ENCODE measurements at regions of chr6 and their contacts with region 1.

Region 1: DNA sequence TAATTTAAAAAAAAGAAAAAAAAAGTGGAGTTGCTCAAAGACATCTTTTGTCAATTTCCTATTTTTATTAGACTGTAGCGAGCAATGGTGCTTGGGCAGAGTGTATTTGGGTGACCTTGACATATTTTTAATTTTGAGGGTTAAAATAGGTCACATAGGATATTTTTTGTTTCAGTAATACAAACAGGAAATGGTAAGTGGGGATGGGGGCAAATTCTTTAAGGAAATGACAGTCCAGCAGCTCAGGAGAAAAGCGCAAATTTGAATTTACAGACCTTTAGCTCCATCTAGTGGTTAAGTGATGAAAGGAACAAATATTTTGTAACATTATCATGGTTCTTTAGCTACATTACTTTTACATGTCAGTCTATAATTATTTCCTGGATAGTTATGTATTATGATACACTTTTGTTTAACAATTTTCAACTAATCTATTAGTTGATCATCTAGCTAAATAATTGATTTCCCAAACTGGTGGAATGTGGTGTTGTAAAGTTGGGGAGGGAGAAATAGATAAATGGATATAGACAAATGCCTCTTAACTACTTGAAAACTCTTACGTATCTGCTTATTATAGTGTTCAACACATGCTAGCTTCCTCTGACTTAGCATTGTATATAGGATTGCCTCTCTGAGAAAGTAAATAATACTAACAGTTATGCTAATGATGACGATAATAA is 10.0 kb downstream of the CITED2 start:
- DNase-seq: no peak
- H3K4me3 ChIP-seq: no peak overlapping the region
- H3K27ac ChIP-seq: no peak overlapping the region
- H3K4me1 ChIP-seq: peaks cover 0 to 4% of the 10 kb centered on the region in 2 donors
- H3K27me3 ChIP-seq: no peaks in the 10 kb centered on the region
- CTCF ChIP-seq: peak; percentile 65 to 76 (median 74)

Region 2: GRCh38 chr6:138817822-138818308 is 546.6 kb before region 1 on chr6:
- intact Hi-C with region 1: loop called (anchors 2 kb)
- DNase-seq: no peak
- H3K4me3 ChIP-seq: no peak overlapping the region
- H3K27ac ChIP-seq: no peak overlapping the region
- H3K4me1 ChIP-seq: no peaks in the 10 kb centered on the region
- H3K27me3 ChIP-seq: no peaks in the 10 kb centered on the region
- CTCF ChIP-seq: no peak

Region 3: DNA sequence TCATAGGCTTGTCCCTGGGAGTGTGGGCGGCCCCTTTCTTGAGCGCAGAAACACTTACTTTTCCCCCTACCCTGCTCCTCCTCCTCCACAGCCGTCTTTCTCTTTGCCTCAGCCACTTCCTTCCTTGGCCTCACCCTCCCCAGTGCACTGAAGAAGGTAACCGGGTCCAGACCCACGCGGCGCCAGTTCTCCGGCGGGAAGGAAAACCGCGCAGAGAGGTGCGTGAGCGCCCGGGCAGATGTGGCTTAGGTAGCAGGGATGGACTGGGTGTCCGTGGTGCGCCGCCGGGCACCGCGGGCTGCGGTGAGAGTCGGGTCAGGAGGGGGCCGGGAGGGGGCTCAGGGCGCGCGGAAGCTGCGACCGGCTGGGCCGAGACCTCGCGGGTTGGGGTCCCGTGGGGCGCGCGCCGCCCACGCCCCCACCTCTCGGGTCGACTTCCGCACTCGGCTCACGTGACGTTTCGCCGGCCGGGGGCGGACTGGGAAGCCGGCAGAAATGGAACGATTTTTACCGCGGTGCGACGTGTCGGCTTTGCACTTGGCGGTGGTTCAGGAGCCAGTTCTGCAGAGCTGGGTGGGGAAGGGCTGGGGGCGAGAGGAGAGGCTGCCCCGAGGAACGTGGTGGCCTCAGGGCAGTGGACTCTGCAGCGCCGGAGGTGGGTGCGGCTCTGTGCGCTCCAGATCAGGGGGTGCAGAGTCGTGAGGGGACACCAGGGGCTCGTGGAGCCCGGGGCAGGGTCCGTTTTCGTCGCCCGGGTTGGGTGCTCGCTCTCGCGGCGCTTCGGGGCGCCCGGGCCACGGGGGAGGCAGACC is 335.6 kb before region 1 on chr6 and contains the start of gene ABRACL:
- intact Hi-C with region 1: loop called (anchors 10 kb)
- DNase-seq: peak; percentile 19 to 82
- H3K4me3 ChIP-seq: peak within 1 kb of the TSS; percentile 72 to 90
- H3K27ac ChIP-seq: peak within 1 kb of the TSS; percentile 72 to 91
- H3K4me1 ChIP-seq: peaks cover 5 to 7% of the 10 kb centered on the region in 2 donors
- H3K27me3 ChIP-seq: no peaks in the 10 kb centered on the region
- CTCF ChIP-seq: no peak
- total RNA-seq, gene ABRACL: 27.6 TPM

Region 4: DNA sequence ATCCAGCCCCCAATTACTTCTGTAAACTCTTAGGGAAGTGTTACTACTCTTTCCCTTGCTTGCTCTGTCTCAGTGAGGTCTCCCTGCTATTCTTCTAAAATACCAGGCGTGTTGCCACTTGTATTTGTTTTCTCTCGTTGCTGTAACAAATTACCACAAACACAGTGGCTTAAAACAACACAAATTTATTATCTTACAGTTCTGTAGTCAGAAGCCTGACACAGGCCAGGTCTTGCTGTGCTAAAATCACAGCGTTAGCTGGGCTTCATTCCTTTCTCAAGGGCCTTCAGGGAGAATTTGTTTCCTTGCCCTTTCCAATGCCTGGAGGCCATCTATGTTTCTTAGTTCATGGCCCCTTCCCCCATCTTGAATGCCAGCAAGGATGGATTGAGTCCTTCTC is 169.6 kb before region 1 on chr6:
- intact Hi-C with region 1: no loop called
- DNase-seq: no peak
- H3K4me3 ChIP-seq: no peak overlapping the region
- H3K27ac ChIP-seq: no peak overlapping the region
- H3K4me1 ChIP-seq: no peaks in the 10 kb centered on the region
- H3K27me3 ChIP-seq: no peaks in the 10 kb centered on the region
- CTCF ChIP-seq: no peak

Region 5: DNA sequence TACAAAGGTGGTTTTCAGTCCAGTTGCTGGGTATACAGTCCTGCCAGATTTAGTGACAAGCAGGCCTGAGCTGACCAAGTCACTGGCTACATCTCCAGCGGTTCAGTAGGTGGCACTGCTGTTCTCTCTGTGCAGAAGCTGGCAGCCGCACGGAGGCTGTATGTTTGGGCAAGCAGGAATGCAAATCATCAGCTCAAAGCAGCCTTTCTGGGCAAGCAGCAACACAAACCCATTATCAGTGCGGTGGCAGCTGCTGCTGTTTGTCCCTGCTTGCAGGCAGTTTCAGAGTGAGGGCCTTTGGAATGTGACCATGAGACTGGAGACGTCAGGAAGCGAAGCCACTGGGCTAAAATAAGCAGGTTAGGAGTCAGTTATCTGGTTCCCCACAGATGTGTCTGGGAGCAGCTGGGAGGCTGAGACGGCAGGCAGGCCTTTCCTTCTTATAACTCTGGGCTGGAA is 145.1 kb before region 1 on chr6:
- intact Hi-C with region 1: loop called (anchors 1 kb)
- DNase-seq: peak; percentile 50 to 94
- H3K4me3 ChIP-seq: peak overlapping the region in 1 of 2 donors; percentile 30
- H3K27ac ChIP-seq: peak overlapping the region; percentile 58 to 78
- H3K4me1 ChIP-seq: peaks cover 0 to 7% of the 10 kb centered on the region in 2 donors
- H3K27me3 ChIP-seq: no peaks in the 10 kb centered on the region
- CTCF ChIP-seq: peak; percentile 75 to 97 (median 90)